IMR-90 (cell line): ENCODE measurements at regions of chr3 and their contacts with region 1.

Region 1: DNA sequence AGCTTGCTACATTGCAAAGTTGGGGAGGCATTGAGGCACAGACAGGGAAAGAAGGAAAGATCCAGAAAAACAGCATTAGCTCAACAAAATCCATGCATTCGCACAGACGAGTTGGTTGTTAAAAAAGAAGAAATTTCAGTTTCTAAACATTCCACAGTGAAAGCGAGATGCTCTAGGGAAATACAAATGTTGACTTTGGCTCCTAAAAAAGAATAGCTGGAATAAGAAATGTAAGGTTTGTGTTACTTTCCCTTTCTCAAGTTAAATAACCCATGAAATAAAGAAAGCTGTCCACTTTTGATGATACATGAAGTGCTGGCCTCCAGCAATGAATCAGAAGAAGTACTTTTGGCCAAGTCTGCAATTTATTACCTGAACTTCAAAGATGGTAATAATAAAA is 465.1 kb downstream of the ERC2 start:
- DNase-seq: no peak
- ATAC-seq: no peak
- H3K4me3 ChIP-seq: no peak overlapping the region
- H3K27ac ChIP-seq: no peak overlapping the region
- H3K4me1 ChIP-seq: no peaks in the 10 kb centered on the region
- H3K27me3 ChIP-seq: no peaks in the 10 kb centered on the region
- CTCF ChIP-seq: no peak
- POLR2A ChIP-seq: no peak
- RAD21 ChIP-seq: no peak

Region 2: DNA sequence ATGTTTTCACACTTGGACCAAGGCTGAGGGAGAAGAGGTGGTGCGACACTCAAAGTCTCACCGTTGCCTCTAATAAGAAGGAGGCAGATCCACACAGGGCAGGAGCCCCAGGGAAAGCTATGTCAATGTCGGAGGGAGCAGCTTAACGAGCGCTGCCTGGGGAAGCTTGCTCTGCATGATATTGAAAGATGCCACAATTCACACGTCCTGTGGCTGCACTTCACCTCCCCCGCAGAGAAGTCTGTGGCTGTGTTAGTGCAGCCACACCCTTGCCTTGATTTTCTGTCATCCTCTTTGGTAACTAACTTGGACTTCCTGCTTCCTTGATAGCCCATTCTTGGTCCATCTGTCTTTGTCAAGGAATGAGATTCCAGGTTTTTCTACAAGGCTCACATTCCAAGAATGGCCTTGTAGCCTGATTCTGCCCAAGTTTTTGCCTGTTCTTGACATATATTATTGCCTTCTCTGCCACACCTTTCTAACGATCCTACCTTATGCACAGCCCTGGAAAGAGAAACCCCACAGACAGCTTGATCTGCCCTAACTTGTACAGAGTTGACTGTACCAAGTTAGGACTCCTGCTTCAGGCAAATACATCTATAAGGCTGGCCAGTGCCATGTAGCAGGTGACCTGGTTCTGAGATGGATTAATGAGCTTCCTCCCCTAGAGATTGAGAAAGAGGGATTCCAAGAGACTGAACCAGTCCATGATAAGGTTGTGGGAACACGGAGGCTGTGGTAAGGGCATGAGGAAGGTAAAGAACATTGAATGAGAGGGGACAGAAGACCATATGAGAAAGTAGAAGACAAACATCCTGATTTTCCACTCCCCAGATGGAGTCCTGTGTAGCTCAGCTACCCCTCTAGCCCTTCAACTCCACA is 363.0 kb before region 1 on chr3:
- CTCF ChIA-PET with region 1: no interaction called
- POLR2A ChIA-PET with region 1: no interaction called
- dilution Hi-C with region 1: no loop called
- in situ Hi-C with region 1: no loop called
- intact Hi-C with region 1: no loop called
- DNase-seq: no peak
- ATAC-seq: no peak
- H3K4me3 ChIP-seq: no peak overlapping the region
- H3K27ac ChIP-seq: no peak overlapping the region
- H3K4me1 ChIP-seq: no peaks in the 10 kb centered on the region
- H3K27me3 ChIP-seq: peaks cover 8% of the 10 kb centered on the region
- CTCF ChIP-seq: no peak
- POLR2A ChIP-seq: no peak
- RAD21 ChIP-seq: no peak

Region 3: GRCh38 chr3:56389183-56389830 is 386.2 kb after region 1 on chr3:
- CTCF ChIA-PET with region 1: interaction called, 10 read pairs
- POLR2A ChIA-PET with region 1: no interaction called
- dilution Hi-C with region 1: no loop called
- in situ Hi-C with region 1: no loop called
- intact Hi-C with region 1: no loop called
- DNase-seq: no peak
- ATAC-seq: no peak
- H3K4me3 ChIP-seq: no peak overlapping the region
- H3K27ac ChIP-seq: no peak overlapping the region
- H3K4me1 ChIP-seq: no peaks in the 10 kb centered on the region
- H3K27me3 ChIP-seq: no peaks in the 10 kb centered on the region
- CTCF ChIP-seq: no peak
- POLR2A ChIP-seq: no peak
- RAD21 ChIP-seq: no peak